ENCODE measurements at regions of chr5 and their contacts with region 1.

Region 1: DNA sequence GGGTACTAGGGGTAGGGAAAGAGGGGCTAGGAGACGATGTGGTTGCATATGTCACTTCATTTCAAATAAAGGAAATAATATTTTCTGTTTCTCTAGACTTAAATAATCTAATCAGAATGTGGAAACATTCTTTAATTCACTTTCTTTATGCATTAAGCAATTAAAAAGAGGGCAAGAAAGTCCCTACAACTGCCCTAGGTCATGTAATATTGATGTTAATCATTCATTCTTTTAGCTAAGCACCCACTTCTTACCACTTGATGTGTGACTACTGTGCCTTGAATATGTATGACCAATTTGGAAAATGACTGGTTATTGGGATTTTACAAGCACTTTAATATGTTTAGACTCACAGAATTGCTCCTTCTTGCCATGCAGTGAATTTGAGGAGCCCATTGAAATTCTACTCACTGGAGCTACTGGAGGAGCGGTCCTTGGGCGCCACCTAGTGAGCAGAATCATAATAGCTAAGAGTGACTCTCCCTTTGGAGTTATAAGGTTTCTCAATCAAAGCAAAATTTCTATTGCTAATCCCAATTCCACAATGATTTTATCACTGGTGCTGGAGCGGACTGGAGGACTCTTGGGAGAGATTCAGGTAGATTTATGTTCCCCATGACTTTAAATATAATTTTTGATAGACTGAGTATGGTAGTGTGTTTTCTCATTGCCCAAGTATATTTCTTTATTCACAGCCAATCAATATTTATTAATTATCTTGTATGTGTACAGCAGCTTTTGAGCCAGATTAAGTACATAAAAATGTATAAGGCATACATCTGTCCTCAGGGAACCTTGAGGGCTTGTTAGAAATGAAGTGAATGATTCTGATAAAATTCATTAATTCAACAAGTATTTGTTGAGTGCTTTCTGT is 225.1 kb downstream of the ADGRV1 start:
- DNase-seq: peak in 8 of 10 donors; percentile 20 to 91 (median 74)

Region 2: GRCh38 chr5:90434116-90434714 is 349.5 kb before region 1 on chr5:
- intact Hi-C with region 1: loop called (anchors 1 kb)
- DNase-seq: peak in 9 of 10 donors; percentile 39 to 95 (median 71)

Region 3: DNA sequence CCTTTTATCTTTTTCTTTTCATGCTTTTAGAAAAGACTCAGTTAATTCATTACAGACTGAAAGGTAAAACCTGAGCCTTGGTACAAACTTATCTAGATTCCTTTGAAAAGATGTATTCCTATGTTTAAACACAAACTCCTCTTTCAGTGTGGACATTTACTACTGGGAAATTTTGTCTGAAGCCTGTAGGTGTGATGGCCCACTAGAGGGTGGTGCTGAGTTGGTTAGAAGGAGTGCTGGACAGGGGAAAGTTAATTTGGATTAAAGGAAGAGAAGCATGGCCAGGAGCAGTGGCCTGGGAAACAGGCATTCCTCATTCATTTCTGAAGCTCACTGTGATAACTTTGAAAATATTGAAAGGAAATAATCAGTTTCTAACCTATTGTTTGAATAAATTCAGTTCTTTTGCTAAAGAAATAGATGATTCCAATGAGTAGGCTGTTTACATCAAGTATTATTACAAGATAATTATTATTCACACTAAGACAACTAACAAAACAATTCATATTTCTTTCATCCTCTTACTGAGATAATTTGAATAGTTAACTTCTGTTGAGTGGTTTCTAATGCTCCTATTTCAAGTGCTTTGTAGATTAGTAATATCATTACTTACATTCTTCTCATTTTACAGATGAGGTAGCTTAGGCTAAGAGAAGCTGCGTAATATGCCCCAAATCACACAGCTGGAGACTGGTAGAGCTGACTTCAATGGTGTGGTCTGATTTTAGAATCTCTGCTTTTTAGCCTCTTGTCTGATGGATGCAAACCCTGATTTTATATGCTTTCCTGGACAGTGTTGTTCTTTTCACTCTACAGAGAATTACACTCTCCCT is 74.2 kb before region 1 on chr5:
- intact Hi-C with region 1: loop called (anchors 2 kb)
- DNase-seq: peak in 6 of 10 donors; percentile 18 to 65 (median 24)

Region 4: DNA sequence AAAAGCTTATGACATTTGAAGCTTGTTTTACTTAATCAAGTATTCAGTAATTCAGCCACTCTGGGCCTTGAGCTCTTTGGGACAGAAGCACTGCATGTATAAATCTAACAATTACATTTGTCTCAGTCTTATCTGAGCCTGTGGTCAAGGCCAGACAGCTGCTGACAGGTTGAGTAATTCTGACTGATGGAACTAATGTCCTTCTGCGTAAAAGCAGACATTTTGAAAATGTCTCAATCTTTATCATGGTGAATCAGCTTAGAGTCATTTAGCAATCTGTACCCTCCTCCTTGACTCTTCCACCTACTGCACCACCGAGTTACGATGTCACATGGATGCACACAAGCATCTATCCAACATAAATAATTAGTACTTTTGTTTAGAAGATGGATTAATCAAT is 199.5 kb after region 1 on chr5:
- intact Hi-C with region 1: no loop called
- DNase-seq: no peak

Measured in posterior cingulate gyrus (tissue), 11 donors.